CD4-positive, alpha-beta memory T cell (primary cell): ENCODE measurements at regions of chr2 and their contacts with region 1.

Region 1: GRCh38 chr2:24342110-24342910 is 18.0 kb downstream of the ITSN2 start:
- DNase-seq: no peak
- H3K4me3 ChIP-seq: no peak overlapping the region
- H3K4me3 Mint-ChIP-seq: peak overlapping the region in 3 of 8 donors; percentile 12 to 26 (median 16)
- H3K27ac ChIP-seq: no peak overlapping the region
- H3K27ac Mint-ChIP-seq: peak overlapping the region in 3 of 7 donors; percentile 33 to 88 (median 50)
- H3K4me1 ChIP-seq: peaks cover 65% of the 10 kb centered on the region
- H3K4me1 Mint-ChIP-seq: peaks cover 54 to 82% (median 70%) of the 10 kb centered on the region in 4 donors
- H3K27me3 ChIP-seq: no peaks in the 10 kb centered on the region
- H3K27me3 Mint-ChIP-seq: no peaks in the 10 kb centered on the region

Region 2: DNA sequence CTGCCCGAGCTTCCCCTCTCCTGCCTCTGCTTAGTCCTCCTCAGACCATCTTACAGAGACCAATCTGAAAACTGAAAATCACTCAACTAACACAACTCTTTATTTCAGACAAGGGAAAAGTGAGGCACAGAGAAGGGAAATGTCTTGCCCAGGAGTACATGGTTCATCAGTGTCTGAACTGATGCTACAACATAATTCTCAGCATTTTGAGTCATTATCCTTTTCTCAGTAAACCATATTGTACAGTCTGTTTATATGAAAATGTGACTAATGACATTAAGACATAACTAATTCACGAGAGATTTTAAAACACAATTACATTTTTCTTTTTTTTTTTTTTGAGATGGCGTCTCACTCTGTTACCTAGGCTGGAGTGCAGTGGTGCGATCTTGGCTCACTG is 44.6 kb before region 1 on chr2:
- CTCF ChIA-PET with region 1: no interaction called
- POLR2A ChIA-PET with region 1: no interaction called
- intact Hi-C with region 1: loop called (anchors 5 kb)
- DNase-seq: no peak
- H3K4me3 ChIP-seq: no peak overlapping the region
- H3K4me3 Mint-ChIP-seq: no peak overlapping the region
- H3K27ac ChIP-seq: no peak overlapping the region
- H3K27ac Mint-ChIP-seq: no peak overlapping the region
- H3K4me1 ChIP-seq: no peaks in the 10 kb centered on the region
- H3K4me1 Mint-ChIP-seq: peaks cover 0 to 4% (median 3%) of the 10 kb centered on the region in 4 donors
- H3K27me3 ChIP-seq: no peaks in the 10 kb centered on the region
- H3K27me3 Mint-ChIP-seq: no peaks in the 10 kb centered on the region

Region 3: GRCh38 chr2:24521975-24522639 is 179.8 kb after region 1 on chr2:
- CTCF ChIA-PET with region 1: no interaction called
- POLR2A ChIA-PET with region 1: no interaction called
- intact Hi-C with region 1: no loop called
- DNase-seq: no peak
- H3K4me3 ChIP-seq: no peak overlapping the region
- H3K4me3 Mint-ChIP-seq: no peak overlapping the region
- H3K27ac ChIP-seq: no peak overlapping the region
- H3K27ac Mint-ChIP-seq: peak overlapping the region in 3 of 7 donors; percentile 29 to 48 (median 45)
- H3K4me1 ChIP-seq: peaks cover 20% of the 10 kb centered on the region
- H3K4me1 Mint-ChIP-seq: peaks cover 36 to 58% (median 46%) of the 10 kb centered on the region in 4 donors
- H3K27me3 ChIP-seq: no peaks in the 10 kb centered on the region
- H3K27me3 Mint-ChIP-seq: no peaks in the 10 kb centered on the region

Region 4: DNA sequence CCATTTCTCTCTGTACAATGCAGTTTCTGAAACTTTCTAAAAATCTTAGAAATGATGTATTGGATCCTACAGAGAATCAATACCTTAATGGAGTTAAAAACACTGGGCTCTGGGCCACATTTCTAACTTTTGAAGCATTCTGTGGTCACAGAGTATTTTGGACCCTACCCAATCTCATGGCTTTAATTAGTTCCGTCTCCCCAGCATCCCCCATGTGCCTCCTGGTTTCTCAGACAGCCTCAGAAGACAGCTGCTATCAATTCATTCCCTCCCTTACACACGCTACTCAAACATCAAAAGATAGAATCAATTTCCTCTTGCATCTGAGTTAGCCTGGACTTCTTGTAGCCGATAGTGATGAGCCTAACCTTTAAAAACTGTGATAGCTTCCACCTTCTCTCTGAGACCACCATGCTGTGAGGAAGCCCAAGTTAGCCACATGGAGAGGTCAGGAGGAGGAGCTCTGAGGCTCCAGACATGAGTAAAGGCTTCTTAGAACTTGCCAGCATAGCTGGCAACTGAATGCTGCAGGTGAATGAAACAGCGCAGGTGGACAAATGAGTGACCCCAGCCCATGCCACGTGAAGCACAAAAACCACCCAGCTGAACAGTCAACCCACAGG is 567.4 kb after region 1 on chr2:
- CTCF ChIA-PET with region 1: no interaction called
- POLR2A ChIA-PET with region 1: no interaction called
- intact Hi-C with region 1: no loop called
- DNase-seq: no peak
- H3K4me3 ChIP-seq: no peak overlapping the region
- H3K4me3 Mint-ChIP-seq: no peak overlapping the region
- H3K27ac ChIP-seq: no peak overlapping the region
- H3K27ac Mint-ChIP-seq: no peak overlapping the region
- H3K4me1 ChIP-seq: no peaks in the 10 kb centered on the region
- H3K4me1 Mint-ChIP-seq: peaks cover 9 to 21% (median 16%) of the 10 kb centered on the region in 4 donors
- H3K27me3 ChIP-seq: no peaks in the 10 kb centered on the region
- H3K27me3 Mint-ChIP-seq: no peaks in the 10 kb centered on the region